ENCODE measurements at regions of chr1 and their contacts with region 1.

Region 1: GRCh38 chr1:24526940-24527542 is 24.4 kb downstream of the RCAN3 start:
- DNase-seq: peak; percentile 65
- ATAC-seq: peak; percentile 47
- H3K4me3 Mint-ChIP-seq: no peak overlapping the region
- H3K27ac Mint-ChIP-seq: no peak overlapping the region
- H3K4me1 Mint-ChIP-seq: peaks cover 6% of the 10 kb centered on the region
- H3K27me3 Mint-ChIP-seq: no peaks in the 10 kb centered on the region

Region 2: DNA sequence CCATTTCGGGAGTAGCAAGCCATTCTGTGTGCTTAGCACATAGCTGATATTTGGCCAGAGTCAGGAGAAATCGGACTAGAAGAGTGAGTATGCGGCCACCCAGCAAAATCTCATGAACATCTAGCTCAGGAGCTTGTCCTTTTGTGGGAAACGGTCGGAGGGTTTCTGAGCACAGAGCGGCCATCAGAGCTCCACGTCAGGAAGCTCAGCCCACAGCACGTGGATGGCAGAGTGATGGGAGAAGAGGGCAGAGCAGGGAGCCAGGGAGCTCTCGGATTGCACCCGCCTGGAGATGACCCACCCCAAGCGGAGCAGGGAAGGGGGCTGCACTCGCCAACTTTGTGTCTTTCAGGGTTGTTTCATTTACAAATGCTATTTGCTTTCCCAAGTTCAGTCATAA is 10.5 kb before region 1 on chr1:
- CTCF ChIA-PET with region 1: interaction called, 12 read pairs
- DNase-seq: no peak
- ATAC-seq: no peak
- H3K4me3 Mint-ChIP-seq: no peak overlapping the region
- H3K27ac Mint-ChIP-seq: no peak overlapping the region
- H3K4me1 Mint-ChIP-seq: peaks cover 5% of the 10 kb centered on the region
- H3K27me3 Mint-ChIP-seq: no peaks in the 10 kb centered on the region

Measured in activated CD8-positive, alpha-beta memory T cell treated with anti-CD3 and anti-CD28 coated beads, Interleukin-2, amount 10 ng/mL, durations not matched to agents 7 days and 5 days (primary cell).